Mammary epithelial cell (primary cell): ENCODE measurements at regions of chr21 and their contacts with region 1.

Region 1: DNA sequence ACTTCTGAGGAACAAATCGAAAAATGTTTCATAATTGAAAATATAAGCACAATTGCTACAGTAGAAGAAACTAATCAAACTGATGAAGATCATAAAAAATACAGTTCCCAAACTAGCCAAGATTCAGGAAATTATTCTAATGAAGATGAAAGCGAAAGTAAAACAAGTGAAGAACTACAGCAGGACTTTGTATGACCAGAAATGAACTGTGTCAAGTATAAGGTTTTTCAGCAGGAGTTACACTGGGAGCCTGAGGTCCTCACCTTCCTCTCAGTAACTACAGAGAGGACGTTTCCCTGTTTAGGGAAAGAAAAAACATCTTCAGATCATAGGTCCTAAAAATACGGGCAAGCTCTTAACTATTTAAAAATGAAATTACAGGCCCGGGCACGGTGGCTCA is 30.6 kb downstream of the IFNAR1 start:
- DNase-seq: no peak
- H3K4me3 ChIP-seq: no peak overlapping the region
- H3K27ac ChIP-seq: no peak overlapping the region
- H3K4me1 ChIP-seq: no peaks in the 10 kb centered on the region
- H3K27me3 ChIP-seq: no peaks in the 10 kb centered on the region
- CTCF ChIP-seq: no peak

Region 2: DNA sequence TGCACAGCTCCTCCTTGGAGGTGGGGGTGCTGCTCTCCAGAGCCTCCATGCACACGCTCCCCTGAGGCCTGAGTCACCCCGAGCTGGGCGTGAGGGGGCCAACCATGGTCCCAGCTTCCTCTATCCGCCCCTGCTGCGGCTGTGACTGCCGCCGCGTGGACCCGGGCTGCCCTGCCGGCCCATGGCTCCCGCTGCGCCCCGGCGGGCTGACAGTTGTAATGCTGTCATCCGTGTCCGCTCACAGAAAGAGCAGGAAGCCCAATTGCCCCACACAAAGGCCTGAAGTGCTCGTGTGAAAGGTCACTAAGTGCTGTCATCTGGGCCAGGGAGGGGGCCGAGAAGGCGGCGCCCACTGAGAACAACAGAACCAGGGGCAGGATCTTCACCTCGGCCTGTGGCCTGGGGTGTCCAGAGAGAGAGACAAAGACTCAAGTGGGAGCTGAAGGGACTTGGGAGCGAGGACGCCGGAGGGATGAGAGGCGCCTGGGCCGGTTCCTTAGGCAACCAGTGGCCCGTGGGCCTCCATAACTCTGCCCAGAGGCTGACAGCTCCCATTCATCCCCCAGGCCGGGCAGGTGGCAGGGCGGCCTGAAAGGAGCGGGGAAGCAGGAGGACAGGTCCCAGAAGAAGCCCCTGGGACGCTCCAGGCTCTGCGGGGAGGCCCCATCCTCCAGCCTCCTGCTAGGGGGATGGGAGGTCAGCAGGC is 253.9 kb before region 1 on chr21:
- CTCF ChIA-PET with region 1: no interaction called
- dilution Hi-C with region 1: no loop called
- in situ Hi-C with region 1: no loop called
- intact Hi-C with region 1: no loop called
- DNase-seq: no peak
- H3K4me3 ChIP-seq: no peak overlapping the region
- H3K27ac ChIP-seq: no peak overlapping the region
- H3K4me1 ChIP-seq: no peaks in the 10 kb centered on the region
- H3K27me3 ChIP-seq: peaks cover 2% of the 10 kb centered on the region
- CTCF ChIP-seq: no peak

Region 3: GRCh38 chr21:33314111-33314510 is 41.2 kb before region 1 on chr21:
- CTCF ChIA-PET with region 1: no interaction called
- dilution Hi-C with region 1: loop called (anchors 5 kb)
- in situ Hi-C with region 1: no loop called
- intact Hi-C with region 1: no loop called
- DNase-seq: peak; percentile 29
- H3K4me3 ChIP-seq: no peak overlapping the region
- H3K27ac ChIP-seq: no peak overlapping the region
- H3K4me1 ChIP-seq: no peaks in the 10 kb centered on the region
- H3K27me3 ChIP-seq: no peaks in the 10 kb centered on the region
- CTCF ChIP-seq: no peak

Region 4: GRCh38 chr21:33789697-33790096 is 434.3 kb after region 1 on chr21:
- CTCF ChIA-PET with region 1: no interaction called
- dilution Hi-C with region 1: no loop called
- in situ Hi-C with region 1: no loop called
- intact Hi-C with region 1: no loop called
- DNase-seq: no peak
- H3K4me3 ChIP-seq: no peak overlapping the region
- H3K27ac ChIP-seq: no peak overlapping the region
- H3K4me1 ChIP-seq: no peaks in the 10 kb centered on the region
- H3K27me3 ChIP-seq: no peaks in the 10 kb centered on the region
- CTCF ChIP-seq: no peak